ENCODE measurements at regions of chr19 and their contacts with region 1.

Region 1: DNA sequence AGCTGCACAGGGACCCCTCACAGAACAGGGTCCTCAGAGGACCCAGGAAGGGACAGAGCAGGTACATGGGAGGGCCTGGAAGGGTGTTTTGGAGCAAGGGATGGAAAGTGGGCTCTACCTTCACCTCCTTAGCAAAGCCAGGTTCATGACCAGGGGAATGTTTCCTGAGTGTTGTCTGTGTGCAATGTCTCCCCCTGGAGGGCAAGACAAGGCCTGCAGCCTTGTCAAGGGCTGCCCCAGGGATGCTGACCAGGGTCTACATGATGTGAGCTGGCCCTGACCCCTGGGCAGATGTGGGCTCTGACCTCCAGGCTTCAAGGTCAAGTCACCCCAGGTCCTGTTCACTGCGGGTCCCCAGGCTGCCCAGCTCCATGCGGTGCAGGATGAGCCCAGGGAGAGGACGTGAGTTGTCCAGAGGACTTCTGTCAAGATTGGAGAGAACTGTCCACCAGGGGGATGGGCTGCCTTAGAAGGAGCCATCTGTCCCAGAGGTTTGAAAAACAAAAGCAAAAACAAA is 1.0 kb upstream of the CEACAM1 start:
- DNase-seq: peak in 1 of 2 experiments; percentile 55
- H3K4me3 ChIP-seq: no peak overlapping the region
- H3K27ac ChIP-seq: no peak overlapping the region
- H3K4me1 ChIP-seq: peaks cover 20% of the 10 kb centered on the region
- H3K27me3 ChIP-seq: no peaks in the 10 kb centered on the region
- CTCF ChIP-seq: peak; percentile 91

Region 2: GRCh38 chr19:42108527-42109389 is 420.5 kb before region 1 on chr19:
- CTCF ChIA-PET with region 1: no interaction called
- POLR2A ChIA-PET with region 1: no interaction called
- intact Hi-C with region 1: loop called (anchors 10 kb)
- DNase-seq: peak; percentile 70 to 83
- H3K4me3 ChIP-seq: no peak overlapping the region
- H3K27ac ChIP-seq: no peak overlapping the region
- H3K4me1 ChIP-seq: peaks cover 14% of the 10 kb centered on the region
- H3K27me3 ChIP-seq: no peaks in the 10 kb centered on the region
- CTCF ChIP-seq: peak; percentile 98

Region 3: GRCh38 chr19:42440357-42441048 is 88.8 kb before region 1 on chr19:
- CTCF ChIA-PET with region 1: interaction called, 13 read pairs
- POLR2A ChIA-PET with region 1: no interaction called
- intact Hi-C with region 1: no loop called
- DNase-seq: peak in 1 of 2 experiments; percentile 65
- H3K4me3 ChIP-seq: peak overlapping the region; percentile 16; the same call in 1 of the 2 replicates
- H3K27ac ChIP-seq: peak overlapping the region; percentile 89
- H3K4me1 ChIP-seq: peaks cover 58% of the 10 kb centered on the region
- H3K27me3 ChIP-seq: no peaks in the 10 kb centered on the region
- CTCF ChIP-seq: peak; percentile 89

Region 4: GRCh38 chr19:42450314-42450934 is 78.9 kb before region 1 on chr19:
- CTCF ChIA-PET with region 1: interaction called, 16 read pairs
- POLR2A ChIA-PET with region 1: interaction called, 3 read pairs
- intact Hi-C with region 1: loop called (anchors 1 kb)
- DNase-seq: peak; percentile 78 to 95
- H3K4me3 ChIP-seq: no peak overlapping the region
- H3K27ac ChIP-seq: peak overlapping the region; percentile 89
- H3K4me1 ChIP-seq: peaks cover 47% of the 10 kb centered on the region
- H3K27me3 ChIP-seq: no peaks in the 10 kb centered on the region
- CTCF ChIP-seq: peak; percentile 92

Region 5: GRCh38 chr19:42455621-42456081 is 73.7 kb before region 1 on chr19:
- CTCF ChIA-PET with region 1: interaction called, 16 read pairs
- POLR2A ChIA-PET with region 1: interaction called, 3 read pairs
- intact Hi-C with region 1: loop called (anchors 1 kb)
- DNase-seq: peak; percentile 68 to 98
- H3K4me3 ChIP-seq: no peak overlapping the region
- H3K27ac ChIP-seq: peak overlapping the region; percentile 78
- H3K4me1 ChIP-seq: peaks cover 31% of the 10 kb centered on the region
- H3K27me3 ChIP-seq: no peaks in the 10 kb centered on the region
- CTCF ChIP-seq: no peak

Region 6: DNA sequence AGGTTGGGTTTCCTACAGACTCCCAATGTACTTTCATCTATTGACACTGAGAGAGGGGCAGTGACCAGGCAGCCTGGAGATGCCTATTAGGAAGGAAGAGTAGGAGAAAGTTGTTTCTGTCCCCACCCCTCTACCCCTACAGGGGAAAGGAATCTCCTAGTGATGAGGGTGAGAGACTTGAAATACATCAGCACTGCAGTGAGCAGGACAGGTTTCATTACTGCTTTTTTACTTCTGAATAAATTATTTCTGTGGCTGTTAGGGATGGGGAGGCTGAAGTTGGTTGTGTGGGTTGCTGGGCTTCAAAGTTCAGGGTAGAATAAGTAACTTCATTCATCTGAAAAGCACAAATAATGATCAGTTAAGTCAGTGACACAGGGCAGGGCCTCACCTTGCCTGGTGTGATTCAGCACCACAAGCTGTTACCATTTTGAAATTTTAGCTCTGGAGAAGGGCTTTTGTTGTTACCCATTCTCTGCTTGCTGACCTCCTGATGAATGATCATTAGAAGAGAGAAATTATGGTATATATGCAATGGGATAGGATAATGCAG is 20.3 kb before region 1 on chr19:
- CTCF ChIA-PET with region 1: no interaction called
- POLR2A ChIA-PET with region 1: no interaction called
- intact Hi-C with region 1: no loop called
- DNase-seq: no peak
- H3K4me3 ChIP-seq: no peak overlapping the region
- H3K27ac ChIP-seq: no peak overlapping the region
- H3K4me1 ChIP-seq: no peaks in the 10 kb centered on the region
- H3K27me3 ChIP-seq: no peaks in the 10 kb centered on the region
- CTCF ChIP-seq: no peak